ENCODE measurements at regions of chr4 and their contacts with region 1.

Region 1: GRCh38 chr4:140012688-140013486 is 141.1 kb downstream of the MAML3 start:
- DNase-seq: peak; percentile 92
- H3K4me3 ChIP-seq: no peak overlapping the region
- H3K27ac ChIP-seq: peak overlapping the region; percentile 49
- H3K4me1 ChIP-seq: peaks cover 17% of the 10 kb centered on the region
- H3K27me3 ChIP-seq: no peaks in the 10 kb centered on the region
- CTCF ChIP-seq: peak; percentile 62 to 74
- POLR2A ChIP-seq: no peak

Region 2: GRCh38 chr4:139740531-139741041 is 272.3 kb before region 1 on chr4:
- CTCF ChIA-PET with region 1: interaction called, 37 read pairs
- POLR2A ChIA-PET with region 1: no interaction called
- dilution Hi-C with region 1: no loop called
- intact Hi-C with region 1: loop called (anchors 1 kb)
- DNase-seq: peak; percentile 92
- H3K4me3 ChIP-seq: no peak overlapping the region
- H3K27ac ChIP-seq: peak overlapping the region; percentile 42
- H3K4me1 ChIP-seq: peaks cover 15% of the 10 kb centered on the region
- H3K27me3 ChIP-seq: no peaks in the 10 kb centered on the region
- CTCF ChIP-seq: no peak
- POLR2A ChIP-seq: no peak

Region 3: GRCh38 chr4:139890816-139891215 is 122.1 kb before region 1 on chr4:
- CTCF ChIA-PET with region 1: interaction called, 18 read pairs
- POLR2A ChIA-PET with region 1: no interaction called
- dilution Hi-C with region 1: no loop called
- intact Hi-C with region 1: loop called (anchors 2 kb)
- DNase-seq: peak; percentile 81
- H3K4me3 ChIP-seq: no peak overlapping the region
- H3K27ac ChIP-seq: peak overlapping the region; percentile 51
- H3K4me1 ChIP-seq: peaks cover 24% of the 10 kb centered on the region
- H3K27me3 ChIP-seq: no peaks in the 10 kb centered on the region
- CTCF ChIP-seq: peak; percentile 21 to 22
- POLR2A ChIP-seq: no peak

Region 4: DNA sequence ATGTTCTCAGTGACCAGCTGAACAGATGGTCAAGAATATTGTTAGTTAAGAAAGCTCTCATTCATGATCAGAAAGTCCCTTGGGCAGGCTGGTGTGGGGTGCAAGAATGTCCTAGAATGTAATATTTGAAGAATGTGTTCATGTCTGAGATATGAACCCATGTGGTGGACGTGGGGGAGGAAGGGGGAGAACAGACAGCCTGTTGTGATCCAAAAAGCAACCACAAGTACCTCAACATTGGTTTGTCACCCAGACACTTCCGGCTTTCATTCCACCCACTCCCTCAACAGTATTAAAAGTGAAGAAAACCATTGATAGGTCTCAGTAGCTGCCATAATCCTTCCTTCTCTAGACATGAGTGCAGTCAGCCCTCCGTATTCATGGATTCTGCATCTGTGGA is 58.9 kb after region 1 on chr4:
- CTCF ChIA-PET with region 1: no interaction called
- POLR2A ChIA-PET with region 1: no interaction called
- dilution Hi-C with region 1: no loop called
- intact Hi-C with region 1: no loop called
- DNase-seq: no peak
- H3K4me3 ChIP-seq: no peak overlapping the region
- H3K27ac ChIP-seq: no peak overlapping the region
- H3K4me1 ChIP-seq: peaks cover 6% of the 10 kb centered on the region
- H3K27me3 ChIP-seq: no peaks in the 10 kb centered on the region
- CTCF ChIP-seq: no peak
- POLR2A ChIP-seq: no peak

Region 5: GRCh38 chr4:140090215-140090731 is 77.4 kb after region 1 on chr4:
- CTCF ChIA-PET with region 1: interaction called, 6 read pairs
- POLR2A ChIA-PET with region 1: interaction called, 3 read pairs
- dilution Hi-C with region 1: no loop called
- intact Hi-C with region 1: loop called (anchors 1 kb)
- DNase-seq: peak; percentile 73
- H3K4me3 ChIP-seq: no peak overlapping the region
- H3K27ac ChIP-seq: peak overlapping the region; percentile 89
- H3K4me1 ChIP-seq: peaks cover 63% of the 10 kb centered on the region
- H3K27me3 ChIP-seq: no peaks in the 10 kb centered on the region
- CTCF ChIP-seq: no peak
- POLR2A ChIP-seq: peak; percentile 58

Region 6: DNA sequence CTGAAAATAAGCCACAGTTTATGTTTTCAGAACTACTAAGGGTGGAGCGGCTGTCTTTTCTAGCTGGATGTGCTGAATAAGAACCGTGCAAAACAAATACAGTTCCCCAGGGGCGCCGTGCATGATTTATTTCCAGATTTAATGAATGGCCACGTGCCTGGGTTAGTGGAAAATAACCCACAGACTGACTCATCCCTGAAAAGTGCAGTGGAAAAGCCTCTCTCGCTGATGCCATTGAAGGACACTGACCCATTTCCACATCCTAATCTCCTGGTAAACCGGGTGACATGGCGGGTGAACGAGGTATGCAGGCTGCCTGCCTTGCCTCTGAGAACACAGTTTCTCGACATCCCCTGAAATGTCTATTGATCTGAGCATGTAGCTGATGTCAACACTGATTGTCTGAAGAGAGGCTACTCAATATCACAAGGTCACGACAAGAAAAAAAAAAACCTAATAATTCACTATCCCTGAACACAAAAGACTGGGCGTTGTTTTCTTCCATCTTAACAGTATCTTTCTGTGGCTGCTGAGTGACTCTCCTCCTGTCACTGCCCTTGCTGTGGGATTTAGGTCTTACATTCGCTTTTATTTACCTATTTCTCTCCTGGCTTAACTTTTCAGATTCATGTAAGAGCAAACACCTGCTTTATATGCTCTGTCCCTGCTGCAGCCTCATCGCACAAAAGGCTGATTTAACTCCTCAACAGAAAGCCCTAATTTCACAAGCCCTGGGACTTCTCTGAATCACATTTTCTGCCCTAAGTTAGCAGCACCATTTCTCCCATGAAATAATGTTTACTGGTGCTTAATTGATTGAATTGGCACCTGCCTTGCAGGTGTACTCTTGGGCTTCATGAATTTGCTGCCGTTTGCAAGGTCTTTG is 283.7 kb after region 1 on chr4:
- CTCF ChIA-PET with region 1: no interaction called
- POLR2A ChIA-PET with region 1: no interaction called
- dilution Hi-C with region 1: no loop called
- intact Hi-C with region 1: no loop called
- DNase-seq: peak; percentile 68
- H3K4me3 ChIP-seq: no peak overlapping the region
- H3K27ac ChIP-seq: no peak overlapping the region
- H3K4me1 ChIP-seq: peaks cover 10% of the 10 kb centered on the region
- H3K27me3 ChIP-seq: no peaks in the 10 kb centered on the region
- CTCF ChIP-seq: no peak
- POLR2A ChIP-seq: no peak

Measured in endothelial cell of umbilical vein (primary cell).